ENCODE measurements at regions of chr17 and their contacts with region 1.

Region 1: DNA sequence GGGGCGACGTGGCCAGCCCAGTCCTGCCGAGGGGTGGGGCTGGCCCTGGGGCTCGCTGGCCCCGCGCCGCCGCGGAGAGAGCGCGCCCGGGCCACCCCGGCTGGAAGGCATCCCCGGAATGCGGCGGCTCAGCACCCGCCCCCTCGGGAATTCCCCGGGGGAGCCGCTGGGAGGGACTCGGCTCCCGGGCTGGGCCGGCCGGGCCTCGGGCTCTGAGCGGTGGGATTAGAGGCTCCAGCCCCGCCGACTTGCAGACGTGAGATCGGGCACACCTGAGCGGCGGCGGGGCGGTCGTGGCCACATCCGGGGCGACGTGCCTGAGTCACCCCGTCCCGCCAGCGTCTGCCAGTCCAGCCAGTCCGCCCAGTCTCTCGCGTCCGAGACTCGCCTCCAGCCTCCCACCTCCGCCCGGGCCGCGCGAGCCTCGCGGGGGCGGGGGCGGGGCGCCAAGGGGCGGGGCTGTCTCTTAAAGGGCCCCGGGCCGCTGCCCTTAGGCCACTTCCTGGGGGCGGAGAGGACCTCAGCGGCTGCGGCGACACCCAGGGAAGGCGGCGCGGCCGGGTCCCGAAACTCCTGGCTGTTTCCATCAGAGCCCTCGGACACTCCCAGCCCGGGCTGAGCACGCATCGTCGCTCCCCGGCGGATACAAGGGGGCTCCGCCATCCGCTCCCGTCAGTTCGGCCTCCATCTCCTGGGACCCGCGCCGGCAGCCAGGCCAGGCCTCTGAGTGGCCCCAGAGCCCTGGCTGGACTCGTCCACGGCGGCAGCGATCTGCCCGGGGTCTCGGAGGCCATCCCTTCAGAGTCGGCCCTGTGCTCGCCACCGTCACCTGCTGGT is at the start of gene KCTD11:
- DNase-seq: peak; percentile 89
- H3K4me3 Mint-ChIP-seq: peak within 1 kb of the TSS; percentile 85
- H3K27ac Mint-ChIP-seq: peak within 1 kb of the TSS; percentile 93
- H3K4me1 Mint-ChIP-seq: peaks cover 17% of the 10 kb centered on the region
- H3K27me3 Mint-ChIP-seq: no peaks in the 10 kb centered on the region
- CTCF ChIP-seq: no peak
- total RNA-seq, gene KCTD11: 9.2 and 10.1 TPM in 2 replicates

Region 2: DNA sequence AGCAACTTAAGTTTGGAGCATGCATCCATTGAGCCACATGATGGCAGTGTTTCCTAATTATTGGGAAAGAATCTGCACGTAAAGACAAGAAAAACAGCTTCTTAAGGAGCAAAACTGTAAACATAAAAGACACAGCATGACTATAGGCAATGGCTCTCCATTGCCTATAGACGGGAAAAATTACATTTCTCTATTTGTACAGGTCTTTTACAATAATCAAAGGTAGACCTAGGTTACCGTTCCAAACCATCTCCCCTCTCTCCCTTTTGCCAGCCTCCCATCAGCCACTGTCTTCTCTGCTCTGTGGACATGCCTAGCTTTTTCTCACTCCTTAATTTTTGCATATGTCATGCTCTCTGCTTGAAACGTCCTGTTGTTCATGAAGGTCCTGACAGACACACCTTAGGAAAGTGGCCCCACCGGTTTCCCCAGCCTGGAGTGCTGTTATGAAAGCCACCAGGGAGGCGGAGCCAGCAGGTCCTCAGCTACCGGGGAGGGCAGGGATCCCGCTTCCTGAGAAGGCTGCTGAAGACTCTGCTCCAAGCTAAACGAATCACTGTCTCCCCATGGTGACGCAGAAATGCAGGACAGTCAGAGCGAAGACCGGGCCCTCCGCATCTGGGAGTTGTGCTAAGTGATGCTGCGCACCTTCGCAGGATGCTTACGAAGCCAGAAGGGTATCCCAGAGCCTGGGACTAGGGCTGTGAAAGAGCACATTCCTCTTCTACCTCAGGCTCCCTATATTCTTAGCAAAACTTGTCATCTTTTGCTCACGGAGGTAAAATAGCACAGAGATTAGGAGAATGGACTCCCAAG is 305.8 kb before region 1 on chr17:
- CTCF ChIA-PET with region 1: interaction called, 3 read pairs
- POLR2A ChIA-PET with region 1: no interaction called
- intact Hi-C with region 1: loop called (anchors 5 kb)
- DNase-seq: peak; percentile 77
- H3K4me3 Mint-ChIP-seq: no peak overlapping the region
- H3K27ac Mint-ChIP-seq: peak overlapping the region; percentile 32
- H3K4me1 Mint-ChIP-seq: peaks cover 11% of the 10 kb centered on the region
- H3K27me3 Mint-ChIP-seq: no peaks in the 10 kb centered on the region
- CTCF ChIP-seq: peak; percentile 79

Region 3: DNA sequence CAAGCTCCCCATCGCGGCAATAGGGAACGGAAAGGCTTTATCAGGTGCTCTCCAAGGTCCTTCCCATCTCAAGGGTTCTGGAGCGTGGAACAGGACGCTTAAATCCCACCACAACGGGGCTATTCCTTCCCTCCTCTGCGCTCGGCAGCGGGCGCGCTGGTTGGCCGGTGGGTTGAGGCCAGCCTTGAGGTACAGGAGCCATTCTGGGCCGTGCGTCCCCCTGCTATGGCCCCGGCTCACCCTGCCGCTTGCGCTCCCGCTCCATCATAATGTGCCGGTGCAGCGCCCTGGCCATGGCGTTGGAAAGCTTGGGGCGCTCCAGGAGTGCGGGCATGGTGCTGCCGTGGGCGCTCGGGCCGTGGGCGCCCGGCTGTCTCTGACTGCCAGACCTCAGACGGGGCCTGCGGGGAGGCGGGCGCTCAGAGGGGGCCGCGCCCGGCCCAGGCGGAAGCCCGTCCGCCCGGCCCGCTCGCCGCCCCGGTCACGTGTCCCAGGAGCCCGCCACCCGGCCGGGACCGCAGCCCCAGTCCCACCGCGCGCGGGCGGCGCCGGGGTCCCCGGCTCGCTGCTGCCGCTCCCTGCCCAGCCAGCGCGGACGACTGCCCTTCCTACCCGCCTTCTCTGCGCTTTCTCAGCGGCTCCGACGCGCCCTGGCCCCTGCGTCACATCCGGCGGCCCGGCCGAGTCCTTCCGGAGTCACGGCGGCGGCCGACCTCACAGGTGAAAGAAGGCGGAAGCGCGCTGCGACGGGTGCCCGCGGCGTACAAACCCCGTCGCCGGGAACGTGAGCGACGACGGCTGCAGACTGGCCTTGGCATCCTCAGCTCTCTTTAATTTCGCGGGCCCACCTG is 36.9 kb before region 1 on chr17 and contains the start of gene GPS2:
- CTCF ChIA-PET with region 1: interaction called, 6 read pairs
- POLR2A ChIA-PET with region 1: interaction called, 23 read pairs
- intact Hi-C with region 1: no loop called
- DNase-seq: peak; percentile 86
- H3K4me3 Mint-ChIP-seq: peak within 1 kb of the TSS; percentile 85
- H3K27ac Mint-ChIP-seq: peak within 1 kb of the TSS; percentile 84
- H3K4me1 Mint-ChIP-seq: peaks cover 36% of the 10 kb centered on the region
- H3K27me3 Mint-ChIP-seq: no peaks in the 10 kb centered on the region
- CTCF ChIP-seq: no peak
- total RNA-seq, gene GPS2: 29.4 and 49.8 TPM in 2 replicates

Region 4: GRCh38 chr17:7367918-7368598 is 16.2 kb after region 1 on chr17:
- CTCF ChIA-PET with region 1: interaction called, 14 read pairs
- POLR2A ChIA-PET with region 1: no interaction called
- intact Hi-C with region 1: no loop called
- DNase-seq: no peak
- H3K4me3 Mint-ChIP-seq: no peak overlapping the region
- H3K27ac Mint-ChIP-seq: no peak overlapping the region
- H3K4me1 Mint-ChIP-seq: no peaks in the 10 kb centered on the region
- H3K27me3 Mint-ChIP-seq: no peaks in the 10 kb centered on the region
- CTCF ChIP-seq: no peak

Region 5: DNA sequence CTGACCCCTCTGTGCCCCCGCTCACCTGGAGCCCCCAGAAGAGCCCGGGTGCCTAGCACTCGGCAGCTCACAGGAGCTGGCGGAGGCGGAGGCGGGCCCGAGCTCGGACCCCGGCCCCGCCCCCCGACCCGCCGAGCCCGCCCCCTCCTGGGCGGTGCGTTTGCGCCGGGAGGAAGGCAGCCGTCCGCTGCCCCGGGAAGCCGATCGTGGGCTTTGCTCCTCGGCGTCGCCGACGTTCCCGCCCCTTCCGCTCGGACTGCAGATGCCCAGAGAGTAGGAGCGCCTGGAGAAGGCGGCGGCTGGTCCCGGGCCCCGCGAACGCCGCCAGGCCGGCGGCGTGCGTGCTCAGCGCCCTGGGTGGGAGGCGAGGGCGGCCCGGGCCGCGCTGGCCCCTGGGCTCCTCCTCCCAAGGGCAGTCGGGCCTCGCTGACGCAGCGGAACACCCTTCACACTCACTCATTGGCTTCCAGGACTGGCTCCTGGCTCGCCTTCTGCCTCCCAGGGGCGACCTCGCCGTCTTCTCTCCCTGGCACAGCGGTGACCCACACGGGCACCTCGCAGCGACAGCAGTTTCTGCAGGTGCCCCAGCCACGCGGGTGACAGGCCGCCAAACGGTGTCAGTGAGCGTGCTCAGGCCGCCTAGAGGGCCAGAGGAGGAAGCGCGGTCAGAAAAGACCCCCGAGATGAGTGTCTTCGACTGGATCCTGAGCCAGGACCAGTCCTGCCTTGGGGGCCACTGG is 42.7 kb after region 1 on chr17 and contains the start of gene PLSCR3:
- CTCF ChIA-PET with region 1: interaction called, 12 read pairs
- POLR2A ChIA-PET with region 1: interaction called, 17 read pairs
- intact Hi-C with region 1: no loop called
- DNase-seq: peak; percentile 83
- H3K4me3 Mint-ChIP-seq: peak within 1 kb of the TSS; percentile 81
- H3K27ac Mint-ChIP-seq: peak within 1 kb of the TSS; percentile 68
- H3K4me1 Mint-ChIP-seq: peaks cover 6% of the 10 kb centered on the region
- H3K27me3 Mint-ChIP-seq: no peaks in the 10 kb centered on the region
- CTCF ChIP-seq: peak; percentile 29
- total RNA-seq, gene PLSCR3: 53.8 and 59.0 TPM in 2 replicates

Region 6: GRCh38 chr17:7478276-7479153 is 126.6 kb after region 1 on chr17:
- CTCF ChIA-PET with region 1: interaction called, 5 read pairs
- POLR2A ChIA-PET with region 1: interaction called, 21 read pairs
- intact Hi-C with region 1: loop called (anchors 5 kb)
- DNase-seq: no peak
- H3K4me3 Mint-ChIP-seq: peak overlapping the region; percentile 84
- H3K27ac Mint-ChIP-seq: peak overlapping the region; percentile 20
- H3K4me1 Mint-ChIP-seq: peaks cover 43% of the 10 kb centered on the region
- H3K27me3 Mint-ChIP-seq: no peaks in the 10 kb centered on the region
- CTCF ChIP-seq: no peak

Region 7: GRCh38 chr17:7989781-7990655 is 638.1 kb after region 1 on chr17:
- CTCF ChIA-PET with region 1: no interaction called
- POLR2A ChIA-PET with region 1: no interaction called
- intact Hi-C with region 1: no loop called
- DNase-seq: peak; percentile 80
- H3K4me3 Mint-ChIP-seq: peak overlapping the region; percentile 63
- H3K27ac Mint-ChIP-seq: no peak overlapping the region
- H3K4me1 Mint-ChIP-seq: peaks cover 13% of the 10 kb centered on the region
- H3K27me3 Mint-ChIP-seq: no peaks in the 10 kb centered on the region
- CTCF ChIP-seq: peak; percentile 91

Measured in MCF 10A (cell line).